Left cardiac atrium (tissue), 4 donors: ENCODE measurements at regions of chr6 and their contacts with region 1.

Region 1: DNA sequence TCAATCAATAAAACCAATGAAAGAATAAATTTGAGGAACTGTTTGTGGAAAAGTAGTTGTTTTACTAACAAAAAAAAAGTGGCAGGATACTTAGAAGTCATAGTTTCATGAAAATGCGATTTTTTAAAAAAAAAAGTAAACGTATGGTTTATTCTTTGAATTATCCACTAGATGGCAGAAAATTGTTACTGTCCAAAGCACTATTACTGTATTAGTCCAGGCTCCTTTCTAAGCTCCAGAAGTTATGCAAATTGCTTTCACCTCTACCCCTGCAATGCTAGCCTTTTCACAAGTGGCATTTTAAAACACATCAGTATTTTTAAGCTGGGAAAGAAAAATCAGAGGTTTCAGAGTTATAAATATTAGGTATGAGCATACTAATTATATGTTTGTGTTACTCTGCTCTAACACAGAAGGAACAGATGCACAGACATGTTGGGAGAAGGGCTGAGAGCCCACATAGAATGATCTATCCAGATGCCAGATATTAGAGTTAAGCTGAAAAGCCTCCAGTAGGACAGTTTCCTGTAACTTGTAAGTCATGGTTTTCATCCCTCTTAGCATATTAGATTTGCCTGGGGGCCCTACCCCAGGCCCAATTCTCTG is 63.9 kb downstream of the FHL5 start:
- DNase-seq: no peak
- ATAC-seq: peak; percentile 58 to 83

Region 2: GRCh38 chr6:96257751-96258150 is 369.1 kb before region 1 on chr6:
- intact Hi-C with region 1: no loop called
- DNase-seq: no peak
- ATAC-seq: no peak

Region 3: GRCh38 chr6:96499781-96500180 is 127.1 kb before region 1 on chr6:
- intact Hi-C with region 1: no loop called
- DNase-seq: no peak
- ATAC-seq: no peak

Region 4: DNA sequence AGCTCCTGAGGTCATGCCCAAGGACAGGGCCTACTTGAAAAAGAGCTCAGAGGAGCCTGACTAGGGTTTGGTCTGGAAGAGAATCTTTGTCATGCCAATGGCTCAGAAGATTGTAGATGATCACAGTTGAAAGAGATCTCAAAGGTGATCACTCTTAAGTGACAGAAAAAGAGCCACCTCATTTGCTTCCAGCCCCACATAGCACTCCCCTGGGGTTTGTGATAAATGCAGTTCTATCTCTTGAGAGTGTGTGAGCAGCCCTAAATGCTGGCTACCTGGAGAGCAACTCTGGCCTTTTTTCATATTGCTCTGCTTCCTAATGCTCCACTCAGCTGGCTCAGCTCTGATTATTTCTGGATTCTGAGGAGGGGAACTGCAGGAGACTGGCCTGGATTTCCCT is 336.9 kb after region 1 on chr6:
- intact Hi-C with region 1: no loop called
- DNase-seq: no peak
- ATAC-seq: no peak

Region 5: GRCh38 chr6:97059473-97059872 is 432.6 kb after region 1 on chr6:
- intact Hi-C with region 1: loop called (anchors 2 to 10 kb)
- DNase-seq: no peak
- ATAC-seq: peak in 1 of 2 donors; percentile 44